HCT116 (cell line): ENCODE measurements at regions of chr1 and their contacts with region 1.

Region 1: GRCh38 chr1:2314803-2315673 is 76.3 kb downstream of the MORN1 start:
- DNase-seq: no peak
- ATAC-seq: peak; percentile 45
- H3K4me3 ChIP-seq: peak overlapping the region; percentile 45 to 53
- H3K27ac ChIP-seq: peak overlapping the region; percentile 69; the same call in 1 of the 2 replicates
- H3K4me1 ChIP-seq: peaks cover 16 to 53% of the 10 kb centered on the region in 2 experiments
- H3K27me3 ChIP-seq: no peaks in the 10 kb centered on the region
- CTCF ChIP-seq: peak in 2 of 3 experiments; percentile 59 to 62; a peak in 4 of 6 replicates
- POLR2A ChIP-seq: no peak
- RAD21 ChIP-seq: no peak

Region 2: GRCh38 chr1:2381741-2382620 is 66.9 kb after region 1 on chr1:
- CTCF ChIA-PET with region 1: interaction called, 13 read pairs
- POLR2A ChIA-PET with region 1: no interaction called
- RAD21 ChIA-PET with region 1: interaction called in 1 of 2 experiments, 3 read pairs
- intact Hi-C with region 1: no loop called
- DNase-seq: peak; percentile 28
- ATAC-seq: peak; percentile 93
- H3K4me3 ChIP-seq: no peak overlapping the region
- H3K27ac ChIP-seq: peak overlapping the region; percentile 8; the same call in 1 of the 2 replicates
- H3K4me1 ChIP-seq: 0 out of 4 replicates have a peak, but pooled peaks cover 0 to 6% of the 10 kb centered on the region in 2 experiments
- H3K27me3 ChIP-seq: no peaks in the 10 kb centered on the region
- CTCF ChIP-seq: peak; percentile 88 to 97 (median 91)
- POLR2A ChIP-seq: no peak
- RAD21 ChIP-seq: peak; percentile 98